CD14-positive monocyte (primary cell): ENCODE measurements at regions of chr19 and their contacts with region 1.

Region 1: DNA sequence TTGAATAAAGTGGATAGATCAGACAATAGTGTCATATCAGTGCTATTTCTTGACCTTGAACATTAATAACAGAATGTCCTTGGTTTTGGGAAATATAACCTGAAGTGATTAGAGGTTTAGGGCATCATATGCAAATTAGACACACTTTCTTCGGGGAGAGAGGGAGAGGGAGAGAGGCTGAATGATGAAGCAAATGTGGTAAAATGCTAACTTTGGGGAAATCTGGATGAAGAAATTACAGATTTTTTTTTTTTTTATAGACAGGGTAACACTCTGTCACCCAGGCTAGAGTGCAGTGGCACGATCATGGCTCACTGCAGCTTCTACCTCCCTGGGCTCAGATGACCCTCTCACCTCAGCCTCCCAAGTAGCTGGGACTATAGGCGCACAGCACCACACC is 3.9 kb upstream of the NCR1 start:
- DNase-seq: peak in 2 of 3 donors; percentile 38 to 51
- H3K4me3 ChIP-seq: no peak overlapping the region
- H3K4me3 Mint-ChIP-seq: no peak overlapping the region
- H3K27ac ChIP-seq: peak overlapping the region in 1 of 2 donors; percentile 89
- H3K27ac Mint-ChIP-seq: peak overlapping the region; percentile 97 to 100 (median 99)
- H3K4me1 ChIP-seq: peaks cover 18 to 31% of the 10 kb centered on the region in 2 donors
- H3K4me1 Mint-ChIP-seq: peaks cover 61% of the 10 kb centered on the region
- H3K27me3 ChIP-seq: peaks cover 0 to 15% of the 10 kb centered on the region in 2 donors
- H3K27me3 Mint-ChIP-seq: peaks cover 15 to 37% (median 22%) of the 10 kb centered on the region in 3 donors
- CTCF ChIP-seq: no peak

Region 2: DNA sequence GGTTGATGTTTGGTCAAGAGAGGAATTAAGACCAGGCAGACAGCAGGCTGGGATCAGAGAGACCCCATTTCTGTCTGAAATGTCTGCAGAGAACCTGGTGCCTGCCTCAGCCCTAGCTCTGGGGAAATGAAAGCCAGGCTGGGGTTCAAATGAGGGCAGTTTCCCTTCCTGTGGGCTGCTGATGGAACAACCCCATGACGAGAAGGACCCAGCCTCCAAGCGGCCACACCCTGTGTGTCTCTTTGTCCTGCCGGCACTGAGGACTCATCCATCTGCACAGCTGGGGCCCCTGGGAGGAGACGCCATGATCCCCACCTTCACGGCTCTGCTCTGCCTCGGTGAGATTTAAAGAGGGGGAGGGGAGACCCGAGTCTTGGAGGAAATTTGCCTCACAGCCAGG is 239.3 kb before region 1 on chr19 and contains the start of gene LILRB4:
- intact Hi-C with region 1: loop called in 1 of 2 experiments (anchors 5 kb)
- DNase-seq: peak; percentile 84 to 87 (median 86)
- H3K4me3 ChIP-seq: peak within 1 kb of the TSS; percentile 32 to 78 (median 61)
- H3K4me3 Mint-ChIP-seq: peak within 1 kb of the TSS; percentile 87 to 95
- H3K27ac ChIP-seq: peak within 1 kb of the TSS; percentile 78 to 90
- H3K27ac Mint-ChIP-seq: peak within 1 kb of the TSS; percentile 83 to 98 (median 96)
- H3K4me1 ChIP-seq: peaks cover 63% of the 10 kb centered on the region in 2 donors
- H3K4me1 Mint-ChIP-seq: peaks cover 67% of the 10 kb centered on the region
- H3K27me3 ChIP-seq: no peaks in the 10 kb centered on the region
- H3K27me3 Mint-ChIP-seq: peaks cover 0 to 7% (median 2%) of the 10 kb centered on the region in 3 donors
- CTCF ChIP-seq: no peak
- polyA plus RNA-seq, gene LILRB4: 35.8 to 102 (median 58.0) TPM

Region 3: DNA sequence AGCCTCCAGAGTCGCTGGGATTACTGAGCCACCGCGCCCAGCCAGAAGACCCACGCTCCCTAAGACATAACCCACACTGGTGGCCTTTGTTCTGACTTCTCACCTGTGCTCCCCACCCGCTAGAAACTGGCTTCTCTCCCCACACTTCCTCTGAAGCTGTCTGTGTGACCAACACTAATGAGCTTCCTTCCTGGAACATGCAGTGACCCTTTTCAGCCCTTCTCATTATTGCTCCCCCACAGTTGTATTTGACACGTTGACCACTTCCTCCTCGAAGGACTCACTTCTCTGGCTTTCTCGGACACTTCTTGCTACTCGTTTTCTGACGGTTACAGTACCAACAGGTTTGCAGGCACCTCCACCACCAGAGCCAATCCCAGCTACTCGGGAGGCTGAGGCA is 14.8 kb after region 1 on chr19:
- intact Hi-C with region 1: no loop called
- DNase-seq: peak; percentile 43 to 69 (median 52)
- H3K4me3 ChIP-seq: no peak overlapping the region
- H3K4me3 Mint-ChIP-seq: peak overlapping the region in 1 of 2 donors; percentile 83
- H3K27ac ChIP-seq: no peak overlapping the region
- H3K27ac Mint-ChIP-seq: peak overlapping the region in 6 of 7 donors; percentile 20 to 75 (median 36)
- H3K4me1 ChIP-seq: peaks cover 9 to 13% of the 10 kb centered on the region in 2 donors
- H3K4me1 Mint-ChIP-seq: peaks cover 17% of the 10 kb centered on the region
- H3K27me3 ChIP-seq: peaks cover 0 to 16% of the 10 kb centered on the region in 2 donors
- H3K27me3 Mint-ChIP-seq: peaks cover 20 to 39% (median 38%) of the 10 kb centered on the region in 3 donors
- CTCF ChIP-seq: no peak